ENCODE measurements at regions of chr9 and their contacts with region 1.

Region 1: GRCh38 chr9:6153425-6153824 is 62.2 kb upstream of the IL33 start:
- DNase-seq: peak; percentile 81
- H3K4me3 ChIP-seq: no peak overlapping the region
- H3K27ac ChIP-seq: peak overlapping the region; percentile 42
- H3K4me1 ChIP-seq: peaks cover 15% of the 10 kb centered on the region
- H3K27me3 ChIP-seq: no peaks in the 10 kb centered on the region
- CTCF ChIP-seq: no peak

Region 2: DNA sequence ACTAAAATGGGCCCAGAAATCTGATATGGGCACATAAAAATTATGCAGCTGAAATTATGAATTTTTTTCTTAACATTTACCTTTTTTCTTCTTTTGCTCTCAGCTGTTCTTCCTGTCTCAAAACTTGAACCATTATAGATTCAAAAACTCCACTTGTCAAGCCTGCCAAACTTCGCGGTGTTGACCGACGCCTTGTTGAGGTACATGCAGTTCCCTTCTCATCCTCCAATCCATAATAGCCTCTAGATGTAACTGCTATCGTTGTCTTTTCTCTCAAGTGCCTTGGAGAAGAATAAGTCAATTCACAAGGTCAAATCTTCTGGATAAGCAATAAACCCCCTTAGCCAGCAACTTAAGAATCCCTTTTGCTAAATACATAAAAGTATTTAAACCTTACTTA is 165.2 kb before region 1 on chr9:
- CTCF ChIA-PET with region 1: no interaction called
- dilution Hi-C with region 1: no loop called
- in situ Hi-C with region 1: no loop called
- intact Hi-C with region 1: no loop called
- DNase-seq: no peak
- H3K4me3 ChIP-seq: no peak overlapping the region
- H3K27ac ChIP-seq: no peak overlapping the region
- H3K4me1 ChIP-seq: no peaks in the 10 kb centered on the region
- H3K27me3 ChIP-seq: no peaks in the 10 kb centered on the region
- CTCF ChIP-seq: no peak

Region 3: GRCh38 chr9:5999443-6000101 is 153.9 kb before region 1 on chr9:
- CTCF ChIA-PET with region 1: no interaction called
- dilution Hi-C with region 1: no loop called
- in situ Hi-C with region 1: no loop called
- intact Hi-C with region 1: no loop called
- DNase-seq: no peak
- H3K4me3 ChIP-seq: no peak overlapping the region
- H3K27ac ChIP-seq: no peak overlapping the region
- H3K4me1 ChIP-seq: peaks cover 7% of the 10 kb centered on the region
- H3K27me3 ChIP-seq: no peaks in the 10 kb centered on the region
- CTCF ChIP-seq: no peak

Region 4: DNA sequence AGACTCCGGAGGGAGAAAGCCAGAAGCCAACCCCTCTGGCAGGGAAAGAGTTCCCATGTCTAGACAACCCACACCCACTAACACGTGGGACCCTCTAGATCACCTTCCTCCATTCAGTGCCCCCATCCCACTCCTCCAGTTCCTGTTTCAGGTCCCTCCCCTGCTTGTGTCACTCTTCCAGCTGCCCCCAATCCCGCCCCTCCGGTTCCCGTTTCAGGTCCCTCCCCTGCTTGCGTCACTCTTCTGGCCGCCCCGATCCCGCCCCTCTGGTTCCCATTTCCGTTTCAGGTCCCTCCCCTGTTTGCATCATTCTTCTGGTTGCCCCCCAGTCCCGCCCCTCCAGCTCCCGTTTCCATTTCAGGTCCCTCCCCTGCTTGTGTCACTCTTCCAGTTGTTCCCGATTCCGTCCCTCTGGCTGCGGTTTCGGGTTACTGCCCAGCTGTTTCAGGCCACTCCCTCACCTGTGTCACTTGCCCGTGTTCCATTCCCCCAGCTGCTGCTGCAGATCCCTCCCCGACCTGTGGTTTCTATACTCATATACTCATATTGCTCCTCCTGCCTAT is 73.2 kb before region 1 on chr9:
- CTCF ChIA-PET with region 1: no interaction called
- dilution Hi-C with region 1: no loop called
- in situ Hi-C with region 1: loop called in 1 of 2 experiments (anchors 10 kb)
- intact Hi-C with region 1: no loop called
- DNase-seq: peak; percentile 99
- H3K4me3 ChIP-seq: peak overlapping the region in 2 of 3 experiments; percentile 18 to 43
- H3K27ac ChIP-seq: peak overlapping the region; percentile 54
- H3K4me1 ChIP-seq: peaks cover 21% of the 10 kb centered on the region
- H3K27me3 ChIP-seq: no peaks in the 10 kb centered on the region
- CTCF ChIP-seq: peak in 1 of 2 donors; percentile 13

Region 5: GRCh38 chr9:6106576-6107339 is 46.7 kb before region 1 on chr9:
- CTCF ChIA-PET with region 1: no interaction called
- dilution Hi-C with region 1: no loop called
- in situ Hi-C with region 1: no loop called
- intact Hi-C with region 1: loop called (anchors 5 kb)
- DNase-seq: peak; percentile 70
- H3K4me3 ChIP-seq: no peak overlapping the region
- H3K27ac ChIP-seq: peak overlapping the region; percentile 67
- H3K4me1 ChIP-seq: peaks cover 45% of the 10 kb centered on the region
- H3K27me3 ChIP-seq: no peaks in the 10 kb centered on the region
- CTCF ChIP-seq: peak; percentile 32 to 71

Region 6: GRCh38 chr9:6215562-6215961 is 62.1 kb after region 1 on chr9 and contains the start of gene IL33:
- CTCF ChIA-PET with region 1: no interaction called
- dilution Hi-C with region 1: no loop called
- in situ Hi-C with region 1: no loop called
- intact Hi-C with region 1: no loop called
- DNase-seq: no peak
- H3K4me3 ChIP-seq: no peak within 1 kb of the TSS
- H3K27ac ChIP-seq: no peak within 1 kb of the TSS
- H3K4me1 ChIP-seq: no peaks in the 10 kb centered on the region
- H3K27me3 ChIP-seq: no peaks in the 10 kb centered on the region
- CTCF ChIP-seq: no peak
- total RNA-seq, gene IL33: 0.50 to 0.94 TPM